ENCODE measurements at regions of chr20 and their contacts with region 1.

Region 1: GRCh38 chr20:53915446-53916172 is 154.8 kb downstream of the BCAS1 start:
- DNase-seq: peak; percentile 100
- H3K4me3 Mint-ChIP-seq: peak overlapping the region; percentile 93
- H3K27ac Mint-ChIP-seq: peak overlapping the region; percentile 84
- H3K4me1 Mint-ChIP-seq: peaks cover 47% of the 10 kb centered on the region
- H3K27me3 Mint-ChIP-seq: no peaks in the 10 kb centered on the region

Region 2: DNA sequence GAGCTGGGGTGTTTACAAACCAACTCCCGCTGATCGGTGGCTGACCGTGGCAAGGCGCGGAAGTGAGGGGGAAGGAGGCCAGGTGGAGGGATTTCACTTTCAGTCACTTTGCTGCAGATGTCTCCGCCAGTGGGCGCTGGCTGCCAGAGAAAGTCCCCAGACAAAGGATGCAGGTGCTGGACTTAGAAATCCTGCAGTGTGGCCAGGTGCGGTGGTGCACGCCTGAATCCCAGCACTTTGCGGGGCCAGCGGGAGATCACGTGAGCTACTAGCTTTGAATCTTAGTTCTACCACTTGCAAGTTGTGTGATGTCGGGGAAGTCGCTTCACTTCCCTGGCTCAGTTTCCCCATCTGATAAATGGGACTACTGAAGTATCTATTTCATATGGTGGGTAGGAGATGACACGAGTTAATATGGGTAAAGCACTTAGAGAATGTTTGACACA is 502.4 kb before region 1 on chr20:
- CTCF ChIA-PET with region 1: no interaction called
- intact Hi-C with region 1: loop called (anchors 5 kb)
- DNase-seq: peak; percentile 73
- H3K4me3 Mint-ChIP-seq: peak overlapping the region; percentile 8
- H3K27ac Mint-ChIP-seq: no peak overlapping the region
- H3K4me1 Mint-ChIP-seq: peaks cover 12% of the 10 kb centered on the region
- H3K27me3 Mint-ChIP-seq: no peaks in the 10 kb centered on the region

Region 3: DNA sequence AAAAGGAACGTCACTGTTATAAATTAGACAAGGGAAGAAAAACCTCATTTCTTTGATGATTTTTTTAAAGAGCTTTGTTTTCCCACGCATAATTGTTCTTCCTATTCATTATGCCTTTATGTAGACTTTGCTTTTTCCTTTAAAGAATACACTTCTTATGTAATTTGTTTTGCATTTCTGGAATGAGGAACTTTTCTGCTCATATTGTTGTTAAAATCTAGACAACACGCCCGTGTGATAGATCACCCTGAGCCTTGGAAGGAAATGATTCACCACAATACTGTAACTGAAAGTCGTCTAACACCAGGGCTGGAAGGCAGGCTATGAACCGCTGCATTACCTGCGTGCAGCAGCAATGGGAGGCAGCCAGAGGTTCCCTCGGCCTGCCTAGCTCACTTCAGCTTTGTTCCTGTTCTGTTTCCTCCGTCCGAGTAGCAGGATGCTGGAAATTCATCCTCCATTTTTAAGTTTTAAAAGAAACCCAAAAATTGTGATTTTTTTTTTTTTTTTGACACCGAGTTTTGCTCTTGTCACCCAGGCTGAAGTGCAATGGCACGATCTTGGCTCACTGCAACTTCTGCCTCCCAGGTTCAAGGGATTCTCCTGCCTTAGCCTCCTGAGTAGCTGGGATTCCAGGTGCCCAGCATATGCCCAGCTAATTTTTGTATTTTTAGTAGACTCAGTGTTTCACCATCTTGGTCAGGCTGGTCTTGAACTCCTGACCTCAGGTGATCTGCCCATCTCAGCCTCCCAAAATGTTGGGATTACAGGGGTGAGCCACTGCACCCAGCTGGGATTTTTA is 272.4 kb before region 1 on chr20:
- CTCF ChIA-PET with region 1: interaction called, 6 read pairs
- intact Hi-C with region 1: loop called (anchors 1 kb)
- DNase-seq: peak; percentile 82
- H3K4me3 Mint-ChIP-seq: peak overlapping the region; percentile 66
- H3K27ac Mint-ChIP-seq: peak overlapping the region; percentile 85
- H3K4me1 Mint-ChIP-seq: peaks cover 40% of the 10 kb centered on the region
- H3K27me3 Mint-ChIP-seq: no peaks in the 10 kb centered on the region

Region 4: DNA sequence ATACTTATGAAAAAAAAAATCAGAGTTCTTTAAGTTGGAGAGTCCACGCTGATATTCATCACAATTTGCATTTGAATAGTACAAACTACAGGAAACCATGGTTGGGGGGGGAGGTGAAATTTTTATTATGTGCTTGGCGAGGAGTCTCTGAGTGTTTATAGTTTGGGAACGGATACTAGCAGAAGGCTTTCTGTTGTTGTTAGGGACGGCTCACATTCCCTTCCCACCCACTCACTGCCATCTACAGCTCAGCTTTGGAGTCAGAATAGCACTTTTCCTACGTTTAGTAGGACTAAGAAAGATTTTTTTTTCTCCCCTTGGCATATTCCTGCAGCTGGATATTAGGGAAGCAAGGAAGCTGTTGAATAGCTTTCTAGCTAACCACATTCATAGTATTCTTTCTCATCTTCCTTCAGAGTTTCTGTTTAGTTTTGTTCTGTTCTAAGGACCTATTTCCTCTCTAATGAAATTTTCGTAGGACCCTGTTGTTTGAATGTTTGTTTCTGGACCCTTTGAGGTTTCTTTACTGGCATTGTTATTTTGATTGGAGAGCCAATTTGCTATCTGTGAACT is 86.8 kb before region 1 on chr20:
- CTCF ChIA-PET with region 1: interaction called, 14 read pairs
- intact Hi-C with region 1: no loop called
- DNase-seq: no peak
- H3K4me3 Mint-ChIP-seq: peak overlapping the region; percentile 72
- H3K27ac Mint-ChIP-seq: peak overlapping the region; percentile 84
- H3K4me1 Mint-ChIP-seq: peaks cover 43% of the 10 kb centered on the region
- H3K27me3 Mint-ChIP-seq: no peaks in the 10 kb centered on the region

Region 5: DNA sequence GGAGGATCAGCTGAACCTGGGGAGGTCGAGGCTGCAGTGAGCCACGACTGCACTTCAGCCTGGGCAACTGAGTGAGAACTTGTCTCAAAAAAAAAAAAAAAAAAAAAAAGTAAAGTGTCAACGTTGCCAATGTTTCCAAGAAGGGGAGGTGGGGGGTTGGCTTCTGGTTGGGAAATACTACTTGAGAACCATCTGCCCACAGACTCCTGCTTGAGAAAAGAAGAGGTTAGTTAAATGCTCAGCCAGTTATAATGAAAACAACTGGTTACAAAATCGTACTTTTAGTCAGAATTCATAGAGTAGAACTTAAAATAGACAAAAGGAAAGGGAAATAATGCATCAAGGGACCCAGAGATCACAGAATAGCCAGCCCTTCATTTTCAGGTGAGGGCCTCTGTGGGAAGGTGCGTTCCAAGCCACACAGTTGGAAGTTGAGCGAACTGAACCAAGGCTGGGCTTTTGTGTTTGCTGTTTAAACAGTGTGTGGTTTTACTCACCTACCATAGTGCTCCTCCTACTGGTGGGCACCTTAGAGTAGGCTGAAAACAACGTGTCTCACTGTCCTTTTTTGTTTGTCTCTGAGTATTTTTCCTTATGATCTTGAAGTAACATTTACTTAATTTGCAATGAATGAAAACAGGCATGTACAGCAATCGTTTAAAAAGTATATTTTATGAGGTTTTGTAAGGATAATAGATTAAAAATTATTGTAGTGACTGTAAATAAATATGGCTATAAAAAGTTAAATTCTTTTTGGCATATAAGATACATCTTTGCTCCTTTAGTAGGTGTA is 45.9 kb before region 1 on chr20:
- CTCF ChIA-PET with region 1: interaction called, 12 read pairs
- intact Hi-C with region 1: loop called (anchors 1 kb)
- DNase-seq: peak; percentile 85
- H3K4me3 Mint-ChIP-seq: peak overlapping the region; percentile 57
- H3K27ac Mint-ChIP-seq: peak overlapping the region; percentile 90
- H3K4me1 Mint-ChIP-seq: peaks cover 67% of the 10 kb centered on the region
- H3K27me3 Mint-ChIP-seq: no peaks in the 10 kb centered on the region

Region 6: DNA sequence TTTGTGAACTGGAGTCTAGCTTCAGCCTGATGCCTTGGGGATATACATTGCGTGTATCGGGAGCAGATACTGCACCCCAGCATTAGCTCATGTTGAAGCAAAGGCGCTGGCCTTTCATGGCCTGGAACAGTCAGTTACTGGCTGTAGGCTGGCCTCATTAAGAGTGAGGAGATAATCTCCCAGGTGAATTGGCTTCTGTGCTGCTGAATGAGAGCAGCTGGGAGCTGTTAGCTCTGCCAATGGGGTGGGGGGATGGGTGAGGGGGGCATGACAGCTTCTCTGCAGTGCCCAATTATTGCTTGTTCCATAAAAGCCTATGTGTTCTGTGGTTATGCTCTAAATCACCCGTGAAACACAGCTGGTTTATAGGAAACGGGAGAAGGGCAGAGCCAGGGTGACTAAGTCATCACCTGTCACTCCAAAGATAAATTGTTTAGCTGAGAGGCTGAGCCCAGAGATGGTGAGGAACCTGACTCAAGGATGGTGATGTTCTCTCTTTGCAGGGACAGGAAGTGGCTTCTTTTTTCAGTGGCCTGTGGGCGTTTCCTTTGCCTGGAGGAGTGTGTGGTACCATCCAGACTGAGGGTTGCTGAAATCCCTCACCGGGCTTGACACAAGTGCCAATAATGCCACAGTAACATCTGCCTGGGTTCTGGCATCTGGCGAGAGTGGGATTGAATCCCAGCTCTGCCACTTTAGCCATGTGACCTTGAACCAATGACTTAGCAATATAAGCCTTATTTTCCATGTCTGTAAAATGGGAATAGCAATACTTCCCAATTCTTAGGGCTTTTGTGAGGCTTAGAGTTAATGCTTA is 16.1 kb before region 1 on chr20:
- CTCF ChIA-PET with region 1: interaction called, 41 read pairs
- intact Hi-C with region 1: loop called (anchors 1 kb)
- DNase-seq: peak; percentile 94
- H3K4me3 Mint-ChIP-seq: no peak overlapping the region
- H3K27ac Mint-ChIP-seq: peak overlapping the region; percentile 85
- H3K4me1 Mint-ChIP-seq: peaks cover 49% of the 10 kb centered on the region
- H3K27me3 Mint-ChIP-seq: no peaks in the 10 kb centered on the region

Region 7: GRCh38 chr20:53939572-53940359 is 24.2 kb after region 1 on chr20:
- CTCF ChIA-PET with region 1: interaction called, 37 read pairs
- intact Hi-C with region 1: loop called (anchors 1 kb)
- DNase-seq: peak; percentile 92
- H3K4me3 Mint-ChIP-seq: no peak overlapping the region
- H3K27ac Mint-ChIP-seq: no peak overlapping the region
- H3K4me1 Mint-ChIP-seq: peaks cover 38% of the 10 kb centered on the region
- H3K27me3 Mint-ChIP-seq: no peaks in the 10 kb centered on the region

Region 8: GRCh38 chr20:54188132-54188849 is 272.7 kb after region 1 on chr20:
- CTCF ChIA-PET with region 1: no interaction called
- intact Hi-C with region 1: no loop called
- DNase-seq: no peak
- H3K4me3 Mint-ChIP-seq: no peak overlapping the region
- H3K27ac Mint-ChIP-seq: no peak overlapping the region
- H3K4me1 Mint-ChIP-seq: no peaks in the 10 kb centered on the region
- H3K27me3 Mint-ChIP-seq: peaks cover 9% of the 10 kb centered on the region

Measured in activated naive CD4-positive, alpha-beta T cell treated with anti-CD3 and anti-CD28 coated beads for 36 hours (primary cell).